ENCODE measurements at regions of chr17 and their contacts with region 1.

Region 1: GRCh38 chr17:17280613-17281549 is at the start of gene COPS3:
- DNase-seq: peak; percentile 98
- CTCF ChIP-seq: no peak

Region 2: GRCh38 chr17:17269926-17270773 is 10.7 kb before region 1 on chr17:
- CTCF ChIA-PET with region 1: interaction called, 13 read pairs
- POLR2A ChIA-PET with region 1: no interaction called
- DNase-seq: no peak
- CTCF ChIP-seq: peak; percentile 26

Region 3: GRCh38 chr17:17496189-17497064 is 215.5 kb after region 1 on chr17 and contains the start of gene RASD1:
- CTCF ChIA-PET with region 1: no interaction called
- POLR2A ChIA-PET with region 1: no interaction called
- DNase-seq: peak; percentile 95
- CTCF ChIP-seq: peak; percentile 93